IMR-90 (cell line): ENCODE measurements at regions of chr19 and their contacts with region 1.

Region 1: GRCh38 chr19:58079792-58080191 is 18.2 kb downstream of the ZSCAN18 start:
- DNase-seq: no peak
- ATAC-seq: no peak
- H3K4me3 ChIP-seq: no peak overlapping the region
- H3K27ac ChIP-seq: no peak overlapping the region
- H3K4me1 ChIP-seq: no peaks in the 10 kb centered on the region
- H3K27me3 ChIP-seq: no peaks in the 10 kb centered on the region
- CTCF ChIP-seq: no peak
- POLR2A ChIP-seq: no peak
- RAD21 ChIP-seq: no peak

Region 2: GRCh38 chr19:58059003-58059670 is 20.7 kb before region 1 on chr19 and contains the start of gene ZNF135:
- CTCF ChIA-PET with region 1: no interaction called
- POLR2A ChIA-PET with region 1: interaction called, 13 read pairs
- dilution Hi-C with region 1: no loop called
- in situ Hi-C with region 1: no loop called
- intact Hi-C with region 1: no loop called
- DNase-seq: peak; percentile 50
- ATAC-seq: peak; percentile 96
- H3K4me3 ChIP-seq: peak within 1 kb of the TSS; percentile 52
- H3K27ac ChIP-seq: peak within 1 kb of the TSS; percentile 56
- H3K4me1 ChIP-seq: 0 out of 2 replicates have a peak, but pooled peaks cover 2% of the 10 kb centered on the region
- H3K27me3 ChIP-seq: no peaks in the 10 kb centered on the region
- CTCF ChIP-seq: no peak
- POLR2A ChIP-seq: no peak
- RAD21 ChIP-seq: no peak
- total RNA-seq, gene ZNF135: 1.9 and 2.7 TPM in 2 replicates